RWPE1 (cell line): ENCODE measurements at regions of chr11 and their contacts with region 1.

Region 1: GRCh38 chr11:107689317-107690202 is 22.3 kb downstream of the SLN start:
- DNase-seq: peak; percentile 64
- H3K27ac ChIP-seq: no peak overlapping the region
- CTCF ChIP-seq: peak; percentile 69

Region 2: GRCh38 chr11:107549253-107549953 is 140.2 kb before region 1 on chr11:
- CTCF ChIA-PET with region 1: interaction called, 19 read pairs
- POLR2A ChIA-PET with region 1: no interaction called
- DNase-seq: peak; percentile 16
- H3K27ac ChIP-seq: no peak overlapping the region
- CTCF ChIP-seq: peak; percentile 92

Region 3: GRCh38 chr11:107563702-107564101 is 125.9 kb before region 1 on chr11:
- CTCF ChIA-PET with region 1: interaction called, 12 read pairs
- POLR2A ChIA-PET with region 1: no interaction called
- DNase-seq: peak; percentile 29
- H3K27ac ChIP-seq: no peak overlapping the region
- CTCF ChIP-seq: peak; percentile 71

Region 4: DNA sequence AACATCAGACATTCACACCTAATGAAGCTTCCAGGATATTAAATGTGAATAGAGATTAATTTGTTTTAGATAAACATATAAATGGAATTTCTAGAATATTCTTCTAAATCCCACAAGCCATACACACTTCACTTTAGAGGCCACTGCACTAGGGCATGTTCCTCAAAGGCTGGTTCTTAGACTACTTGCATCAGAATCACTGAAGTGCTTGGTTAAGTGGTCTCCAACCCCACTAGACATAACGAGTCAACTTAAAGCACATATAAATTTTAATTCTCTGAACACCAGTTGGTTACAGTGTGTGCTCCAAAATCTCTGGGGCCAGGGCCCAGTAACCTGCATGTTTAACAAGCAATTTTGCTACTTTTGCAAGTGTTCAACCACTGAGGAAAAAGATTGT is 116.1 kb before region 1 on chr11:
- CTCF ChIA-PET with region 1: interaction called, 12 read pairs
- POLR2A ChIA-PET with region 1: no interaction called
- DNase-seq: no peak
- H3K27ac ChIP-seq: no peak overlapping the region
- CTCF ChIP-seq: no peak